ENCODE measurements at regions of chr17 and their contacts with region 1.

Region 1: GRCh38 chr17:48002266-48002915 is 31.5 kb downstream of the CDK5RAP3 start:
- DNase-seq: peak; percentile 98
- H3K4me3 ChIP-seq: peak overlapping the region; percentile 6
- H3K27ac ChIP-seq: peak overlapping the region; percentile 98
- H3K4me1 ChIP-seq: peaks cover 67% of the 10 kb centered on the region
- H3K27me3 ChIP-seq: no peaks in the 10 kb centered on the region
- CTCF ChIP-seq: no peak

Region 2: GRCh38 chr17:46865100-46865499 is 1137.3 kb before region 1 on chr17:
- CTCF ChIA-PET with region 1: no interaction called
- POLR2A ChIA-PET with region 1: no interaction called
- intact Hi-C with region 1: no loop called
- DNase-seq: peak; percentile 17
- H3K4me3 ChIP-seq: no peak overlapping the region
- H3K27ac ChIP-seq: no peak overlapping the region
- H3K4me1 ChIP-seq: no peaks in the 10 kb centered on the region
- H3K27me3 ChIP-seq: no peaks in the 10 kb centered on the region
- CTCF ChIP-seq: no peak

Region 3: DNA sequence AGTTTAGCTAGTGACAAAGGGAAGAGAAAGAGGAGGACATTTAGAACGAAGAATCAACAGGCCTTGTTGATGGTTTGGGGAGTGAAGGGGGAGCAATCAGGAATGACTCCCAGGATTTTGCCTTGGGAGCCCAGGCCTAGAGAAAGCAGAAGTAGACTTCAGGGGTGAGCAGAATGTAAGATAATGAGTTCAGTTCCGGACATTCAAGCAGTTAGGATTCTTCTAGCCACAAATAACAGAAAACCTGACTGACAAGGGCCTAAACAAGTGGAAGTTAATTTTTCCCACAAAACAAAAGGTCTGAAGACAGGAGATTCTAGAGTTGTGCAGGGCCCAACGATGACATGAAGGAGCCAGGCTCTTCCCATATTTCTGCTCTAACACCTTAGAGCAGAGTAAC is 381.8 kb after region 1 on chr17:
- CTCF ChIA-PET with region 1: interaction called, 13 read pairs
- POLR2A ChIA-PET with region 1: no interaction called
- intact Hi-C with region 1: no loop called
- DNase-seq: no peak
- H3K4me3 ChIP-seq: no peak overlapping the region
- H3K27ac ChIP-seq: no peak overlapping the region
- H3K4me1 ChIP-seq: peaks cover 34% of the 10 kb centered on the region
- H3K27me3 ChIP-seq: peaks cover 38% of the 10 kb centered on the region
- CTCF ChIP-seq: no peak